PC-3 (cell line): ENCODE measurements at regions of chr2 and their contacts with region 1.

Region 1: GRCh38 chr2:69741619-69742466 is at the start of gene ANXA4:
- DNase-seq: peak; percentile 89
- ATAC-seq: peak; percentile 91
- H3K4me3 ChIP-seq: peak within 1 kb of the TSS; percentile 85
- H3K27ac ChIP-seq: peak within 1 kb of the TSS; percentile 82
- H3K4me1 ChIP-seq: peaks cover 17% of the 10 kb centered on the region
- H3K27me3 ChIP-seq: no peaks in the 10 kb centered on the region
- CTCF ChIP-seq: no peak
- total RNA-seq, gene ANXA4: 43.3 and 51.1 TPM in 2 replicates

Region 2: DNA sequence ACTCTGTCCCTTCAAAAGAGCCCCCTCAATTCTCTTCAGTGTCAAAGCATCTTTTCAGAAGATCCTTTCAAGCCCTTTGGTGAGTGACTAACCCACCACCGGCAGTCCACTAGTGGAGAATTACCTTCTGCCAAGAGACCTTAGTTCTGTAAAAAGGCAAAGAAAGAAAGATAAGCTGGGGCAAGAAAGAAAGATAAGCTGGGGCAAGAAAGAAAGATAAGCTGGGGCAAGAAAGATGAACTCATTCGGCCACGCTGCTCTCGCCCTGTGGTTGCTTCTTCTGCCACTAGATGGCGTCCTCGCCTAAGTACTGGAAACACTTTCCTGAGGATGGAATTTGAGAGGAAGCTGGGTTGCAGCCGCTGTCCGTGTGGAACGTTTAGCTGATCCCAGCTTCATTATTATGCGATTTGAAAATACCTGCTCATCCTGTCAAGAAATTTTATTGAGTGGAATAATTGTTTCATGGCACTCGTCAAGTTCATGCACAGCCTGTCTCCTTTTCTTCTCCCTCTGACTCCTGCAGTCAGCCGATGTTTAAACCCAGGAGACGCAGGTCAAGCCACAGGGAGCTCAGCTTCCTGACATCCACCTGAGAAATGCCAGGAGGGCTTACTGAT is 17.2 kb before region 1 on chr2:
- CTCF ChIA-PET with region 1: interaction called, 14 read pairs
- POLR2A ChIA-PET with region 1: no interaction called
- intact Hi-C with region 1: loop called (anchors 2 kb)
- DNase-seq: peak; percentile 94
- ATAC-seq: peak; percentile 84
- H3K4me3 ChIP-seq: peak overlapping the region; percentile 72
- H3K27ac ChIP-seq: no peak overlapping the region
- H3K4me1 ChIP-seq: no peaks in the 10 kb centered on the region
- H3K27me3 ChIP-seq: no peaks in the 10 kb centered on the region
- CTCF ChIP-seq: peak; percentile 93

Region 3: DNA sequence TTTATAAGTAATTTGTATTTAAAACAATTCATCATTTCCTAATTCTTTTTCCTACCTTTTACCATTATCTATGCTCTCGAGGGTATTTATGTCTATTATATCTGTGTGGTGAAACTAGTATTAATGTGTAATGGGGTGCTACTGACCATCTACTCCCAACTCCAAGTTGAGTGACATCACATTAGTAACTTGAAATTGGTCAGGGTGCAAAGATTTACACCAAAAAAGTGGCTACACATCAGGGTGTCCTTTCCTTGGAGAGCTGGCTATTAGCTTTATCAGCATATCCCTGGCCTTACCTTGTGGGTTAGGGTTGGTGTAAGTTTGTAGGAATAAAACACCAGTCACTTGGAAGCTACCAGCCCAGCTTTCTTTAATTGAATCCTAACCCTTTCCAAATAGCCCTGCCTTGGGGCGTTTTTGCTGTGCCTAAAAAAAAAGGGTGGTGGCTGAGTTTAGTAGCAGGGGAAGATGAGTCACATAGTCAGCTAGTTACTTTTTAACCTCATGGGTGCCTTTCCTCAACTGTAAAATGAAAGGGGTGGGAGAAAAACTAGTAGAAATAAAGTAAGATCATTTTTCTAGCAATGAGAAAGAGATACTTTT is 14.1 kb after region 1 on chr2:
- CTCF ChIA-PET with region 1: interaction called, 4 read pairs
- POLR2A ChIA-PET with region 1: interaction called, 9 read pairs
- intact Hi-C with region 1: loop called (anchors 2 kb)
- DNase-seq: peak; percentile 97
- ATAC-seq: peak; percentile 98
- H3K4me3 ChIP-seq: peak overlapping the region; percentile 47
- H3K27ac ChIP-seq: peak overlapping the region; percentile 83
- H3K4me1 ChIP-seq: peaks cover 15% of the 10 kb centered on the region
- H3K27me3 ChIP-seq: no peaks in the 10 kb centered on the region
- CTCF ChIP-seq: no peak

Region 4: DNA sequence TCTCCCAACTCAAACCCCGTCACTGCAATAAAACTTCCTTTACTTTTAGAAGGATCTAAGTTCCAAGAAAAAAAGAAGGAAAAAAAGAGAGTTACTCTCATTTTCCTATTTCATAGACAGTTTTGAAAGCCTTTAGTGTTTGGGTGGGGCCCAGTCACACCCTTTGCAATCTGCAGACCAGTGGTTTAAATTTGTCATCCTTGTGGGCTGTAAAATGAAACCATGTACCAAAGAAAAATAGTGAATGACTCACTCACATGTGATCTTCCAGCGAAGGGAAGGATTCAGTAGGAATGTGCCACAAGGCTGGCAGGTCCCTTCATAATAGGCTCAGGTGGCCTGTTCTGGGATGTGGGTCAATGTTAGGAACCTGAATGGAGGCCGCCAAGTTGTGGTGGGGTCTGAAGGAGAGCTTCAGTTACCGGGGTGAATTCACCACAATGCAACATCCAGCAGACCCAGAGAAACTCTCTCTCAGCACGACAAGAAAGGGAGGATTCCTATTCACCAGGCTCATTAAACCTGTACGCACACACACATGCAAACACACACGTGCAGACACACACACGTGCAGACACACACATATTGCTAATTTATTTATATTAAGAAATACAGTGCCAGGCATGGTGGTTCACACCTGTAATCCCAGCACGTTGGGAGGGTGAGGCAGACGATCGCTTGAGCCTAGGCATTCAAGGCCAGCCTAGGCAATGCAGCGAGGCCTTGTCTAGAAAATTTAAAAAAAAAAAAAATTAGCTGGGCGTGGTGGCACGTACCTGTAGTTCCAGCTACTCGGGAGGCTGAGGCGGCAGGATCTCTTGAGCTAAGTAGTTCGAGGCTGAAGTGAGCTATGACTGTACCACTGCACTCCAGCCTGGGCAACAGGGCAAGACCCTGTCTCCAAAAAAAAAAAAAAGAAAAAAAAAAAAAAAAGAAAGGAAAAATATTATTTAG is 28.6 kb after region 1 on chr2:
- CTCF ChIA-PET with region 1: no interaction called
- POLR2A ChIA-PET with region 1: no interaction called
- intact Hi-C with region 1: loop called (anchors 2 kb)
- DNase-seq: peak; percentile 94
- ATAC-seq: peak; percentile 90
- H3K4me3 ChIP-seq: peak overlapping the region; percentile 34; the same call in 1 of the 2 replicates
- H3K27ac ChIP-seq: peak overlapping the region; percentile 91
- H3K4me1 ChIP-seq: peaks cover 71% of the 10 kb centered on the region
- H3K27me3 ChIP-seq: no peaks in the 10 kb centered on the region
- CTCF ChIP-seq: no peak

Region 5: DNA sequence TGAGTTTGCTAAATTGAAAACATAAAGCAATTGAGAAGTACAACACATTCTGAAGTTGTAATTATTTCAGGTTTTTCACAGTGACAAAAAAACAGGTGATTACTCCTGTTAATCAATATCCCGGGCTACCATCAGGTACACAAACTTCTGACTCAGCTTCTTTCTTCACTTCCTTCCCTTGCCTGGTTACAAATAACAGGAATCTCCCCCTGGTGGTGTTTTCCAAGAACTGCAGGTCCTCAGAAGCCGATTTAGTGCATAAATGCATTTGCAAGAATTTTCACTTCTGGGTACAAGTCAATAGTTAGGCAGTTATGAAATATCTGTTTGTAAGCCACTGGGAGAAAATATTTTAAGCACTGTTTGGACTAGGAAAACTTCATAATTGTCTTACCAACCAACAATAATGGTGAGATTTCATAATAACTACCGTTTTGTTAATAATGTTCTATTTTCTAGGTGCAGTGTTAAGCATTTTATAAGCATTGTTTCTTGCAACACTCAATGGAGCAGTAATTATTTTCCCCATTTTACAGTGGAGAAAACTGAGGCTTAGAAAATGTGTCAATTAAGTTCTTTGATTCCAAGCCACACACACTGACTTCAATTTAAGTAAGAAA is 75.2 kb after region 1 on chr2:
- CTCF ChIA-PET with region 1: interaction called, 6 read pairs
- POLR2A ChIA-PET with region 1: no interaction called
- intact Hi-C with region 1: loop called (anchors 1 kb)
- DNase-seq: peak; percentile 97
- ATAC-seq: peak; percentile 56
- H3K4me3 ChIP-seq: no peak overlapping the region
- H3K27ac ChIP-seq: no peak overlapping the region
- H3K4me1 ChIP-seq: peaks cover 13% of the 10 kb centered on the region
- H3K27me3 ChIP-seq: no peaks in the 10 kb centered on the region
- CTCF ChIP-seq: peak; percentile 94

Region 6: GRCh38 chr2:69893684-69894551 is 152.1 kb after region 1 on chr2 and contains the start of gene SNRNP27:
- CTCF ChIA-PET with region 1: no interaction called
- POLR2A ChIA-PET with region 1: no interaction called
- intact Hi-C with region 1: loop called (anchors 5 kb)
- DNase-seq: peak; percentile 86
- ATAC-seq: peak; percentile 79
- H3K4me3 ChIP-seq: peak within 1 kb of the TSS; percentile 82
- H3K27ac ChIP-seq: peak within 1 kb of the TSS; percentile 58
- H3K4me1 ChIP-seq: peaks cover 10% of the 10 kb centered on the region
- H3K27me3 ChIP-seq: no peaks in the 10 kb centered on the region
- CTCF ChIP-seq: no peak
- total RNA-seq, gene SNRNP27: 44.1 and 56.3 TPM in 2 replicates